Activated CD4-positive, alpha-beta T cell treated with anti-CD3 and anti-CD28 coated beads, Interleukin-2, amount 10 ng/mL, durations not matched to agents 7 days and 5 days (primary cell): ENCODE measurements at regions of chr15 and their contacts with region 1.

Region 1: GRCh38 chr15:40769274-40770146 is at the start of gene C15orf62:
- DNase-seq: peak; percentile 50
- H3K4me3 Mint-ChIP-seq: peak within 1 kb of the TSS; percentile 37
- H3K27ac Mint-ChIP-seq: peak within 1 kb of the TSS; percentile 90
- H3K4me1 Mint-ChIP-seq: peaks cover 43% of the 10 kb centered on the region
- H3K27me3 Mint-ChIP-seq: no peaks in the 10 kb centered on the region
- total RNA-seq, gene C15orf62: 1.0 to 1.3 TPM

Region 2: GRCh38 chr15:40290918-40291574 is 478.5 kb before region 1 on chr15:
- CTCF ChIA-PET with region 1: no interaction called
- POLR2A ChIA-PET with region 1: no interaction called
- DNase-seq: no peak
- H3K4me3 Mint-ChIP-seq: no peak overlapping the region
- H3K27ac Mint-ChIP-seq: no peak overlapping the region
- H3K4me1 Mint-ChIP-seq: no peaks in the 10 kb centered on the region
- H3K27me3 Mint-ChIP-seq: no peaks in the 10 kb centered on the region

Region 3: GRCh38 chr15:40743921-40744814 is 25.3 kb before region 1 on chr15:
- CTCF ChIA-PET with region 1: interaction called, 13 read pairs
- POLR2A ChIA-PET with region 1: no interaction called
- DNase-seq: peak; percentile 74
- H3K4me3 Mint-ChIP-seq: peak overlapping the region; percentile 26
- H3K27ac Mint-ChIP-seq: peak overlapping the region; percentile 92
- H3K4me1 Mint-ChIP-seq: peaks cover 47% of the 10 kb centered on the region
- H3K27me3 Mint-ChIP-seq: no peaks in the 10 kb centered on the region